Head of caudate nucleus (tissue), 42 donors: ENCODE measurements at regions of chr1 and their contacts with region 1.

Region 1: DNA sequence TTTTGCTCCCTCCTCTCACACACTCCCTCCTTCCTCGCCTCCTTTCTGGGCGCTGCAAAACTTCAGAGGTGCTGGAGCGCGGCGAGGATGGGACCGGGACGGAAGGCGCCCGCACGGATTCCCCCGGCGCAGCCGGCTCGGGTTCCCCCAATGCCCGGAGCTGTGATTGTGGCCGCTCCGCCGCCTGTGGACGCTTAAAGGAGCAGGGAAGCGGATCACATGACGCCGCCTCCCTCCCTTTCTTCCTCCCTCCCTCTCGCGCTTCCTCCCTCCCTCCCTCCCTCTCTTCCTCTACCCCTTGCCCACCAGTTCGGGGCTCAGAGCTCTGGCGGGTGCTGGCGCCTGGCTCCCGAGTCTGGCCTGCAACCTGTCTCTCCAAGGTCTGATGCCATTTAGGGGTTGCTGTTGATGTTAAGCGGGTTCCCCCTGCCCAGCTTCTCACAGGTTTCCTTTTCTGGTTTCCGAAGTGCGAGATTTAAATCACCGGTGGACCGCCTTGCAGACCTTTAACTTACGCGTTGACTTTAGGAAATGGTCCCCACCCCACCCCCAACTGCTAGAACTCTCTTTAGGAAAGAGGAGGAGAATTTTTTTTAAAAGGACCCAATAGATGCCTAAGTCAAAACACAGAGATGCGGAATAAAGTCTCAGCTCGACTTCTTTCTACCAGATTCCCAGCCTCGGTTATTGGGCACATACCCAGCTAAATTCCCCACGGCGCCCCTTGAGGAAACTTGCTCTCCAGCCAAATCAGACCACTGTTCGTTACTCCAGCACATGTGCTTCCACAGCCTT is at the start of gene WLS:
- DNase-seq: peak; percentile 57 to 92 (median 80)

Region 2: GRCh38 chr1:68145418-68146126 is 87.0 kb before region 1 on chr1:
- intact Hi-C with region 1: no loop called
- DNase-seq: no peak

Region 3: DNA sequence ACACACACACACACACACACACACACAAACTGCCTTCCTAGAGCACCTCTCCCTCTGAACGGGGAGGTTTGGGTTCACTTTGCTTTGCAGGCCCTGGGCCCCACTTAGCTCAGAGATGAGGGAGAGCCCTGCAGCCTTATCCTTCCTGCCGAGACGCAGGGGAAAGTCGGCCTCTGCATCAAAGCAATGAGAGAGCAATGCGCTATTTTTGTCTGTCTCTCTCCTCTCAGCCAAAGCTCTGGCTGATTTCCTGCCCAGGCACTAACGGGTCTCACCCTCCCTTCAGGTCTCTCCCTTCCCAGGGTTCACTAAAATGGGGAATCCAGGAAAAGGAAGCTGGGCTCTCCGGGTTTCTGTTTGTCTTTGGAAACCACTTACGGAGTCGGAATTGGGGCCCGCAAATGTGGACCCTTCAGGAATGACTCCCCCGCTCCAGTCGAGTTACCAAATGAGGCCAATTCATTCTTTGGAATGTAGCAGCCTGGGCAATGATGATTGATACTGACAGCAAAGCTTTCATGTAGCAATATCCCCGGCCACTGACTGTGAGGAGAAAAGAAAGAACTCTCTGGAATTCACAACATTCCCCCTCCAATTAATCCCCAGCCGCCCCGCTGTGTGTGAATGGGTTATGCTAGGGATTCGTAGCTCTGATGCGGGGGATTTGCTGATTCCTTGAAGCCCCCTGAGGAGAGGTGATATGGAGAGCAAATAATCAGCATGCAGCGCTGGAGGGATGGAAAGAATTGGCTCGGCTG is 61.2 kb after region 1 on chr1:
- intact Hi-C with region 1: loop called (anchors 10 kb)
- DNase-seq: peak in 22 of 42 donors; percentile 5 to 55 (median 18)

Region 4: GRCh38 chr1:68321084-68321685 is 88.6 kb after region 1 on chr1:
- intact Hi-C with region 1: loop called (anchors 10 kb)
- DNase-seq: peak in 41 of 42 donors; percentile 12 to 79 (median 56)